IMR-90 (cell line): ENCODE measurements at regions of chr2 and their contacts with region 1.

Region 1: DNA sequence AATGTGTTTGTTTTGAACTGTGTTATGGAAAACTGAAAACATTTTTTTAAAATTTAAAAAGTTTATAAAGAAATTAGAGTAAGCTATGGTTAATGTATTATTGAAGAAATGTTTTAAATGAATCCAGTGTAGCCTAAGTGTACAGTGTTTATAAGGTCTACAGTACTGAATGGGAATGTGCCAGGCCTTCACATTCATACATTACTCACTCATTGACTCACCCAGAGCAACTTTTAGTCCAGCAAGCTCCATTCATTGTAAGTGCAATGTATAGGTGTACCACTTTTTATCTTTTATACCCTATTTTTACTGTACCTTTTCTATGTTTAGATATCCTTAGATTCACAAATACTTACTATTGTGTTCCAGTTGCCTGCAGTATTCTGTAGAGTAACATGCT is 215.1 kb upstream of the THUMPD2 start:
- DNase-seq: peak; percentile 92
- ATAC-seq: peak; percentile 77
- H3K4me3 ChIP-seq: no peak overlapping the region
- H3K27ac ChIP-seq: no peak overlapping the region
- H3K4me1 ChIP-seq: peaks cover 9% of the 10 kb centered on the region; the same call in 1 of the 2 replicates
- H3K27me3 ChIP-seq: no peaks in the 10 kb centered on the region
- CTCF ChIP-seq: no peak
- POLR2A ChIP-seq: no peak
- RAD21 ChIP-seq: no peak

Region 2: DNA sequence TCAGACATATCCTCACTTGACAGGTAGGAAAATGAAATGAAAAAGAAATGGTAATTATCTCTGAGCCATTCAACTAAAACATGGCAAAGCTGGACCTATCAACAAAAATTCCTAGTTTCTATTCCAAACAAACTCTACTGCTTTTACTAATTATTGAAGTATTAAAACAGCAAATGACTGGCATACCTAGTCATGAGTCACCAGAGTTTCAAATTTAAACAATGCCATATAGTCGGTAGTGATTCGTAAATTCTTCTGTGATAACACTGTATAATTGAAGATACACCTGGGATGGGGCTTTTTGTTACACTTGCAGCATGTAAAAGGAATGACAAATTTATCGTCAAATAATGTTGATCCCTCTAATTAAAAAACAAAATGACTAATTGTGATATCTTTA is 62.0 kb before region 1 on chr2:
- CTCF ChIA-PET with region 1: no interaction called
- POLR2A ChIA-PET with region 1: no interaction called
- dilution Hi-C with region 1: no loop called
- in situ Hi-C with region 1: no loop called
- intact Hi-C with region 1: loop called (anchors 5 kb)
- DNase-seq: peak; percentile 56
- ATAC-seq: peak; percentile 42; the same call in 1 of the 2 replicates
- H3K4me3 ChIP-seq: no peak overlapping the region
- H3K27ac ChIP-seq: peak overlapping the region; percentile 78; the same call in 1 of the 2 replicates
- H3K4me1 ChIP-seq: peaks cover 9% of the 10 kb centered on the region; the same call in 1 of the 2 replicates
- H3K27me3 ChIP-seq: no peaks in the 10 kb centered on the region
- CTCF ChIP-seq: no peak
- POLR2A ChIP-seq: no peak
- RAD21 ChIP-seq: no peak

Region 3: DNA sequence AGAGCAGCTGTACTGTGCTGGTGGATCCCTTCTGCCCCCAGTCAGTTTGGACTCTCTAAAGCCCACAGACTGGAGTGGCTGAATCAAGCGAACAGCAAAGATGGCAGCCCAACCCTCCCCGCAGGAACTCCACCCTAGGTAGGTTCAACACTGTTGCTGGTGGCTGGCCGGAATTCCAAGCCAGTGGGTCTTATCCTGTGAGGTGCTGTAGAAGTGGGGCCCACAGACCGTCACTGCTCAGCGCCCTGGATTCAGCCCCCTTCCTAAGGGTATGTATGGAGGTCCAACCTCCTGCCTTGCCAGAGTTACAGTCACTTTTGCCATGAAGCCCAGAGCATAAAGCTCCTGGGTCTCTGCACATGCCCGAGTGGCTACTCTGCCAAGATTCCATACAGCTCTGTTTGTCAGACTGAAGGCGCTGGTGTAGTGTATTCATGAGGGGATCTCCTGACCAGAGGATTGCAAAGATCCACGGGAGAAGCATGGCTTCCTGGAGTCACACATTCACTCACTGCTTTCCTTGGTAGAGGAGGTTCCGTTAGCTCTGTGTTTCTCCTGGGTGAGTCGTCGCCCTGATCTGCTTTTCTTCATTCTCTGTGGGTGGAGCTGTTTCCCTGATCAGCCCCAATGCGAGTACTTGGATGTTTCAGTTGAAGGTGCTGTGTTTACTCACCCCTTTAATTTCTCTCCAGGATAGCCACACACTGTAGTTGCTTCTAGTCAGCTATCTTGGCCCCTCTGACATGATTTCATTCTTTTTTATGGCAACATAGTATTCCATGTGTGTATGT is 78.5 kb after region 1 on chr2:
- CTCF ChIA-PET with region 1: no interaction called
- POLR2A ChIA-PET with region 1: no interaction called
- dilution Hi-C with region 1: no loop called
- in situ Hi-C with region 1: no loop called
- intact Hi-C with region 1: no loop called
- DNase-seq: no peak
- ATAC-seq: no peak
- H3K4me3 ChIP-seq: no peak overlapping the region
- H3K27ac ChIP-seq: no peak overlapping the region
- H3K4me1 ChIP-seq: no peaks in the 10 kb centered on the region
- H3K27me3 ChIP-seq: no peaks in the 10 kb centered on the region
- CTCF ChIP-seq: no peak
- POLR2A ChIP-seq: no peak
- RAD21 ChIP-seq: no peak